Heart left ventricle (tissue), 16 donors: ENCODE measurements at regions of chr19 and their contacts with region 1.

Region 1: GRCh38 chr19:37906869-37907734 is at the start of gene SIPA1L3:
- DNase-seq: peak; percentile 94 to 97 (median 95)
- ATAC-seq: peak; percentile 97 to 99 (median 99)
- H3K4me3 ChIP-seq: peak within 1 kb of the TSS; percentile 76 to 98 (median 88)
- H3K27ac ChIP-seq: peak within 1 kb of the TSS in 11 of 12 donors; percentile 47 to 81 (median 76)
- H3K4me1 ChIP-seq: peaks cover 0 to 19% (median 12%) of the 10 kb centered on the region in 12 donors
- H3K27me3 ChIP-seq: no peaks in the 10 kb centered on the region
- CTCF ChIP-seq: peak in 2 of 12 donors; percentile 18 to 25
- POLR2A ChIP-seq: peak in 1 of 2 donors; percentile 86
- total RNA-seq, gene SIPA1L3: 6.3 to 22.9 (median 9.4) TPM

Region 2: DNA sequence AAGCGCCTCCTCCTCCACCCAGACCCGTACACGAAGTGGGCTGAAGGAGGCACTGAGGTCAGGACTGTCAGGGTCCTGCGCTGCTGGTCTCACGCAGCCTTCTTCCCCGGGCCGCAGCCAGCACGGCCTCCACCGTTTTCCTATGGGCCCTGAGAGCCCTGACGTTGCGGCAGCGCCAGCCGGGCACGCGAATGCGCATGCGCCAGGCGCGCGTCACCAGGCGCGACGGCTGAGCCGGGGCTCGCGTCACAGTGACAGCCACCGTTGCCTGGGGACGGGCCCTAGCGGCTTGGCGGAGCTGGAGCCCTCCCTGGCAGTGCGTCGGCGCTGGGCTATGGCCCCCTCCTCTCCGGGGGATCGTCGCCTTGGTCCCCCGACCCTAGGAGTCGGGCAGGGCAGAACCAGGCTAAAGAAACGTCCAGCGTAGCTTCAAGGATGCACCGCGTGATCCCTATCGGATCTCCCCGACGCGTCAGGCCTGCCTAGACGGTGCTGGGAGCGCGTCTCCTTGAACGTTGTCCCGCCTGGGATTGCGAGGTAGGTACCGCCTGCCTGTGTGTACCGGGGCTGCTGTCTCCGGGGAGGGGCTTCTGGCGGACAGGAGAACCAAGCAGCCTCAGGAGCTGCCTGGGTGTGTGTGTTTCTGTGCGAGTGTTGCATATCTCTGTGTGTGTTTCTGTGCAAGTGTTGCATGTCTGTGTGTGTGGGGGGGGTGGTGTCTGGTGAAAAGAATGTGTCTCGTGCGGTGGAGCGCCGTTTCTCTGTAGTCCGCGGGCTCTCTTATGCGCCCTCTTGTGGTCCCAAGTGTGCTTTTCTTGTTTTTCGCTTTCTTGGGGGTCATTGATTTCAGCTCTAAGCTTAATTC is 355.7 kb before region 1 on chr19:
- intact Hi-C with region 1: no loop called
- DNase-seq: peak; percentile 62 to 78 (median 70)
- ATAC-seq: peak; percentile 72 to 94 (median 88)
- H3K4me3 ChIP-seq: peak overlapping the region; percentile 33 to 90 (median 69)
- H3K27ac ChIP-seq: peak overlapping the region in 11 of 12 donors; percentile 37 to 82 (median 74)
- H3K4me1 ChIP-seq: no peaks in the 10 kb centered on the region
- H3K27me3 ChIP-seq: no peaks in the 10 kb centered on the region
- CTCF ChIP-seq: peak in 9 of 12 donors; percentile 25 to 58 (median 43)
- POLR2A ChIP-seq: peak; percentile 19 to 24

Region 3: DNA sequence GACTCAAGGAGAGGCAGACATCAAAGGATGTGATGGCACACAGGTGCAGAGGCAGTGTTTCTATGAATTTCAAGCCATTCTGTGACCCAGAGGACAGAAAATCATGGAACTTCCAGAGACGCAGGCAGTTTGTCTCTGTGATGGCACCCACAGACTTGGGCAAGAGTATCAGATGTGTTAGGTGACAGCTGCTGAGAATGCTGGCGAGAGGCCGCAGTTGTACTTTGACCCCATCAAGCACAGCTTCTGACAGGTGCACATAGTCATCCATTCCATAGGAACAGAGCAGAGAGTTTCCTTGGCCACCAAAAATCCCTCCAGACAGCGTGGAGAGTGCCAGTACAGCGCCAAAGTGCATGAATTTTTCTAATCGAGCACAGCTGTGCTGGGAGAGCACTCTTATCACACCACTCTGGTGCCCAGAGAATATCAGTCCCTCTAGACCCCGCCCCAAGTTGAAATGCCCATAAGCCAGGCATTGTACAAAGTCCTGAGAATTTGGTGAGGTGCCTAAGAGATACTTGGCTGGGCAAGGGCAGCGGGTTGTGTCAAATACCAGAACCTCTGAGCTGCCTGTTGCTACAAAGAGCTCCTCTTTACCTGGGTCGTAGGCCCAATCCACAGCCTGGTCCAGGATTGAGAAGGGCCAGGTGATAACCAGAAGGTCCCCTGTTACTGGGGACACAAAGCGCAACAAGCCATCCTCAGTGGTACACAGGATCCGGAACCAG is 13.1 kb before region 1 on chr19:
- intact Hi-C with region 1: no loop called
- DNase-seq: no peak
- ATAC-seq: no peak
- H3K4me3 ChIP-seq: no peak overlapping the region
- H3K27ac ChIP-seq: no peak overlapping the region
- H3K4me1 ChIP-seq: peaks cover 0 to 4% (median 0%) of the 10 kb centered on the region in 12 donors
- H3K27me3 ChIP-seq: peaks cover 0 to 20% (median 0%) of the 10 kb centered on the region in 9 donors
- CTCF ChIP-seq: no peak
- POLR2A ChIP-seq: no peak

Region 4: GRCh38 chr19:38004521-38005223 is 97.6 kb after region 1 on chr19:
- intact Hi-C with region 1: loop called in 4 of 10 experiments (anchors 5 to 10 kb)
- DNase-seq: peak; percentile 81 to 89 (median 88)
- ATAC-seq: peak; percentile 96 to 98 (median 96)
- H3K4me3 ChIP-seq: peak overlapping the region in 11 of 12 donors; percentile 2 to 58 (median 50)
- H3K27ac ChIP-seq: peak overlapping the region; percentile 59 to 93 (median 77)
- H3K4me1 ChIP-seq: peaks cover 4 to 42% (median 22%) of the 10 kb centered on the region in 12 donors
- H3K27me3 ChIP-seq: no peaks in the 10 kb centered on the region
- CTCF ChIP-seq: no peak
- POLR2A ChIP-seq: peak in 1 of 2 donors; percentile 72

Region 5: DNA sequence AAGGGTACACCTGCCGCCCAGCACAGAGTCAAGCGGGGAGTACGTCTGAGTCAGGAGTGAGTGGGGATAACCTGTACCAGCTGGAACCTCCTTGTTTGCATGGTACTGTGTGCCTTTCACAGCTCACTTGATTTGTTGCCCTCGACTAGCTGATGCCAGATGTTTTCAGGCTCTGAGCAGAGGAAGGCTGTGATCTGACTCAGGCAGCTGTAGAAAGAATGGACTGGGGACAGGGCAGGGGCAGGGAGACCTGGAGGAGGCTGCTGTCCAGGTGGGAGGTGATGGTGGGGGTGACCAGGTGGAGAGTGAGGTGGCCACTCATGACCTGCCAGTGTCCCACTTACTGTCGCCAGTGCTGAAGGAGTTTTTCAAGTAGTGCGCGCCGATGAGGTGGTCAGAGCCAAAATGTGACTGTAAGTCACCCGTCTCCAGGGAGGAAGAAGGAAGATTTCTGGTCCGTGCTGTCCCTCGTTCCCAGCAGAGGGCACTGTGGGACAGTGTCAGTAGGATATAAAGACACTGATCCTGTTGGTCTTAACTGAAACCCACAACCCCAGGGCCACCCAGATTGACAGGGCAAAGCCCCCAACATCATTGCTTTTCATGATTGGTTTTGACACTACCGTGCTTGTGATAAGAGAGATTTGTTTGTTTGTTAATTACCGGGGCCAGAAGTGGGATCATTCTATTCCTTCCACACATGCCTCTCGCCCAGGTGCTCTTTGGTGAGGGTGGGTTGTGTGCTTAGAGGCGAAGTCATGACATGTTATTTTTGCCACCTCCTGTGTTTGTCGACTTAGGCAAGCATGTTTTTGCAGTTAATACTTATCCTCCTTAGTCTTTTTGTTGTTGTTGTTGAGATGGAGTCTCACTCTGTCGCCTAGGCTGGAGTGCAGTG is 188.6 kb after region 1 on chr19:
- intact Hi-C with region 1: loop called (anchors 2 to 10 kb)
- DNase-seq: peak; percentile 52 to 75 (median 66)
- ATAC-seq: peak in 3 of 4 donors; percentile 45 to 77 (median 58)
- H3K4me3 ChIP-seq: no peak overlapping the region
- H3K27ac ChIP-seq: no peak overlapping the region
- H3K4me1 ChIP-seq: peaks cover 0 to 21% (median 0%) of the 10 kb centered on the region in 12 donors
- H3K27me3 ChIP-seq: no peaks in the 10 kb centered on the region
- CTCF ChIP-seq: peak; percentile 59 to 79 (median 72)
- POLR2A ChIP-seq: no peak

Region 6: DNA sequence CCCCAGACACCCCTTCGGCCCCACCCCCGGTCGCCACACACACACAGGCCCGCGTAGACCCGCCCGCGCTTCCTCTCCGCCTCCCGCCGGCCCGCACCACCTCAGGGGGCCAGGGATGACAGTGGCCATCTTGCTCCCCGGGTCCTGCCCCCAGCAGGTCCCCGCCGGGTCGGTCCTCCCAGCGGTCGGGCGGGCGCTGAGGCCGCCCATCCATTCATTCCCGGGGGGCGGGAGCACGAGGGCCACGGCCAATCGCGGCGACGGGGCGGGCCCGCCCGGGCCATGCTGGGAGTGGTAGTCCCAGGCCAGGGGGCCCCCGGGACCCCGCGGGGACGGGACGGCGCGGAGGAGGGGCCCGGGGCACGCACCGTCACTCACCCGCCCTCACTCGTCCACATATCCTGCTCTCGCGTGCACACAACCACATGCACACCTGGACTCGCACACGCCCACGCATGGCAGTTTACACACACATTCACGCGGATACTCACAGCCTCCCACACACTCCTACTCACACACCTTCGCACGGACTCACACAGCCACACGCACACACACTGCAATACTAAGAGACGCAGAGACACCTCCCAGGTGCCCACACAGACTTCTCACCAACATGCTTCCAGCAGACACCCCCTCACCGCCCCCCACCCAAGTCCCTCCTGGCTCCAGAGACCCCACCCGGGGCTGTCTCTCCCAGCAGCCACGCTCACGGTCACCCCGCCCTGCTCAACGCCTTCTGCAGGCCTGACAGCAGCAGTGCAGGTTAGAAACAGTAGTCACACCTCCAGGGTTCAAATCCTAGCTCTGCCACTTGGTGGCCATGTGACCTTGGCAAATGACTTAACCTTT is 317.1 kb after region 1 on chr19 and contains the start of gene DPF1:
- intact Hi-C with region 1: loop called in 2 of 10 experiments (anchors 5 to 10 kb)
- DNase-seq: peak in 4 of 5 donors; percentile 52 to 73 (median 61)
- ATAC-seq: peak in 3 of 4 donors; percentile 82 to 89 (median 83)
- H3K4me3 ChIP-seq: peak within 1 kb of the TSS; percentile 14 to 58 (median 46)
- H3K27ac ChIP-seq: no peak within 1 kb of the TSS
- H3K4me1 ChIP-seq: peaks cover 7 to 24% (median 16%) of the 10 kb centered on the region in 12 donors
- H3K27me3 ChIP-seq: peaks cover 21 to 92% (median 58%) of the 10 kb centered on the region in 9 donors
- CTCF ChIP-seq: no peak
- POLR2A ChIP-seq: no peak
- total RNA-seq, gene DPF1: 0.11 to 1.2 (median 0.37) TPM in 7 of 9 donors, not detected in the others

Region 7: DNA sequence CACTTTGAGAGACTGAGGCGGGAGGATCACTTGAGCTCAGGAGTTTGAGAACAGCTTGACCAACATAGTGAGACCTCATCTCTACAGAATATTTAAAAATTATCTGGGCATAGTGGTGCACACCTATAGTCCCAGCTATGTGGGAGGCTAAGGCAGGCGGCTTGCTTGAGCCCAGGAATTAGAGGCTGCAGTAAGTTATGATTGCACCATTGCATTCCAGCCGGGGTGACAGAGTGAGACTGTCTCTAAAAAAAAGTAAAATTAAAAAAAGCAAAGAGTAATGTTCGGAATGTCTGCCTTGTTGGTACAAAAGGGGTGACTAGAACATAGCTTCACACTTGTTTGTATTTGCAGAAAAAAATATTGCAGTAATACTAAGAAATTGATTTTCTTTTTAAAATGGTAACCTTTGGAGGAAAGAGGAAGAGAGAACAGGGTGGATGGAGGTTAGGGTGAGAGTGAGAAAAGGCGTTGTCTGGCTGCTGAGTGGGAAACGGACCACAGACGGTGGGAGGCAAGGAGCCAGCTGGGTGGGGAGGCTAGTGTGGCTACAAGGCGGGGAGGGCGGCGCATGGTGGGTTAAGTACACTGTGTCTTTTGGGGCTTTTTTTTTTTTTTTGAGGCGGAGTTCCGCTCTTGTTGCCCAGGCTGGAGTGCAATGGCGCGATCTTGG is 338.9 kb after region 1 on chr19:
- intact Hi-C with region 1: loop called in 1 of 10 experiments (anchors 10 kb)
- DNase-seq: peak in 1 of 5 donors; percentile 49
- ATAC-seq: peak in 1 of 4 donors; percentile 16
- H3K4me3 ChIP-seq: no peak overlapping the region
- H3K27ac ChIP-seq: peak overlapping the region in 6 of 12 donors; percentile 11 to 76 (median 40)
- H3K4me1 ChIP-seq: peaks cover 0 to 46% (median 16%) of the 10 kb centered on the region in 12 donors
- H3K27me3 ChIP-seq: no peaks in the 10 kb centered on the region
- CTCF ChIP-seq: no peak
- POLR2A ChIP-seq: no peak